Psoas muscle (tissue), 8 donors: ENCODE measurements at regions of chr16 and their contacts with region 1.

Region 1: GRCh38 chr16:56450986-56451752 is at the starts of genes NUDT21 and OGFOD1:
- DNase-seq: peak; percentile 92 to 97
- ATAC-seq: peak; percentile 95 to 99 (median 98)
- H3K4me3 ChIP-seq: peak within 1 kb of the TSS; percentile 87
- H3K27ac ChIP-seq: peak within 1 kb of the TSS; percentile 96
- H3K4me1 ChIP-seq: peaks cover 38% of the 10 kb centered on the region
- H3K27me3 ChIP-seq: no peaks in the 10 kb centered on the region
- CTCF ChIP-seq: no peak
- total RNA-seq, gene NUDT21: 41.1 to 52.4 (median 48.5) TPM
- total RNA-seq, gene OGFOD1: 56.3 to 97.6 (median 73.4) TPM

Region 2: GRCh38 chr16:56691885-56692284 is 240.7 kb after region 1 on chr16:
- intact Hi-C with region 1: no loop called
- DNase-seq: no peak
- ATAC-seq: peak; percentile 40 to 83 (median 73)
- H3K4me3 ChIP-seq: no peak overlapping the region
- H3K27ac ChIP-seq: peak overlapping the region; percentile 53
- H3K4me1 ChIP-seq: no peaks in the 10 kb centered on the region
- H3K27me3 ChIP-seq: no peaks in the 10 kb centered on the region
- CTCF ChIP-seq: no peak

Region 3: DNA sequence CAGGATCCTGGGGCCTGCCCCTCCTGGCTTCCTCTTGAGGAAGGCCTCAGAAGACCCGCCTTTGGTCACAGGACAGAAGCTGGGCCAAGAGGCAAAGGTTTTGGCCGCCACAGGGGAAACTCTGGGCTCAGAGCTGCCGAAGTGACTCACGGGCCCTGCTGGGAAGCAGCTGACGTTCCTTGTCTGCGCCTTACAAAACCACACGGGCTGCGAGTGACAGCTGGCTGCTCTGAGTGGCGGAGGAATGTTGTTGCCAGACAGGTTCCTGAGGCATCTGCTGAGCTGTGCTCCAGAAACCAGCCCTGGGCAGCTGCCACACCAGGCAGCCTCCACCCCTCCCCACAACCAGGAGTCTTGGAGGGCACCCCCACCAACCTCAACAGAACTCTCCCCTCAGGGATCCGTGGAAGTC is 1365.2 kb after region 1 on chr16:
- intact Hi-C with region 1: loop called in 1 of 2 experiments (anchors 5 kb)
- DNase-seq: peak; percentile 92 to 97
- ATAC-seq: peak; percentile 96 to 99 (median 98)
- H3K4me3 ChIP-seq: no peak overlapping the region
- H3K27ac ChIP-seq: peak overlapping the region; percentile 76
- H3K4me1 ChIP-seq: peaks cover 18% of the 10 kb centered on the region
- H3K27me3 ChIP-seq: no peaks in the 10 kb centered on the region
- CTCF ChIP-seq: no peak